Posterior cingulate gyrus (tissue), 11 donors: ENCODE measurements at regions of chr17 and their contacts with region 1.

Region 1: DNA sequence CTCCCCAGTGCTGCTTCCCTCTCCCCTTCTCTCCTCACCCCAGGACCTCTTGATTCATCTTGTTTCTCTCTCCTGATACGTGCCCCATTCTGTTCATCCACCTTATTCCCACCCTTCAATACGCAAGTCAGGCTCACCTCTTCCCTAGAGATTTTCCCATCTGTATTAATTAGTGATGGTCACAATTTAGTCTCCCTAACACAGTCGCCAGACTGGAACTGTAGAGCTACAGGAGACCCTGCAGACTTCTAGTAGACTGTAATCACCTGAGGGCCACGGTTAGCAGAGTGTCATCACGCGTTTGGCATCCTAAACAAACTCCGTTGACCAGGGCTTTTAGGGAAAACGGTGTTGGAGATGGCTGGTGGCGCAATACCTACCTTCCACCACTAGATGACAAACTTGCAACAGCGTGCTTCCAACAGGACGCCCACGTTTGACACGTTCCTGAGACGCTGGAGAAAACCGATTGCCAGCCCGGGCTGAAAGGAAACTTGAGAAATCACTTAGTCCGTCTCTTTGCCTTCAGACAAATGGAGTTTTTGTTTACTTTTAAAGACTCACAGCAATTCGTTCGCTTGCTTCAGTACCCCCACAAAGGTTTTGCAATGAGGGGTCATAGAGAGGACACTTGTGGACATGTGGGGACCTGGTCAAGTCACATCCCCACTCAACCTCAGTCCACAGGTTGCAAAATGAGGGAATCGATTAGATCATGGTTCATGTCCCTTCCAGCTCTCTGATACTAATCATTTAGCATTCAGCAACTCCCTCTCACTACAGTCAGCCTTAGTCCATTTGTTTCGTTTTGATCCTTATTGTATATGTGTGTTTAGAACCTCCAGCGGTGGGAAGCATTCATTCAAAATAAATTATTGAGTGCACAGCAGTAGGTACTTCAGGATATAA is 20.6 kb downstream of the MYL4 start:
- DNase-seq: peak; percentile 54 to 95 (median 78)

Region 2: DNA sequence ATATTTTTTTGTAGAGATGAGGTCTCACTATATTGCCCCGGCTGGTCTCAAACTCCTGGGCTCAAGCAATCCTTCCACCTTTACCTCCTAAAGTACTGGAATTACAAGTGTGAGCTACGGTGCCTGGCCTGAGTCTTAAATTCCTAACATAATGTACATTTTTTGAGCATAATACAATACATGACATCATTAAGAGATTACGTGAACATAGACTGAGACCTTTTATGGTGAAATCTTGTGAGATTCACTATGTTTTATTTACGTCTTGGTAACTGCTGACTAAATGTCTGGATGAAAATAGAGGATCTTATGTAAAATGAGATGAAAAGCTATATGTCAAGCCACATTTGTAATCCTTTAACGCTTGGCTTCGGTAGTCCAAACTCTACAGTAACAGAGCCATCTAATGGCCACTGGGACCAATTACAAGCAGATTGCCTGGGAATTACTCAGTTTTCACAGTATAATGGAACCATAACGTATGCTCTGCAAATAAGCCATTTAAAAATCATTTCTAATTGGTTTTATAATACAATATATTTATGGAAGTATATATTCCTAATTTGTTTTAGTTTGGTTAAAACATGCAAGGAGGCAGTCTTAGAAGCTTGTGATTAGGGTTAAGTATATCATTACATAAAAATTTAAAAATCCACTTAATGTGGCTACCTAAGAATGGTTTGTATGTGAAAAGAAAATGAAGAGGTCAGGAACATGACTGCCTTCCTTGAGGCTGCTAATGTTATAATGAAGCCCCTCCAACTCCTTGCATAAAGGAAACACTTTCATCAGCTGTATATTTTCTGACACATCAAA is 85.9 kb after region 1 on chr17:
- intact Hi-C with region 1: loop called (anchors 1 kb)
- DNase-seq: peak in 2 of 10 donors; percentile 26 to 30

Region 3: GRCh38 chr17:47615766-47616424 is 386.1 kb after region 1 on chr17:
- intact Hi-C with region 1: loop called (anchors 10 kb)
- DNase-seq: no peak